Activated naive CD4-positive, alpha-beta T cell treated with anti-CD3 and anti-CD28 coated beads for 36 hours (primary cell): ENCODE measurements at regions of chr18 and their contacts with region 1.

Region 1: GRCh38 chr18:56575819-56576663 is 62.4 kb downstream of the TXNL1 start:
- DNase-seq: no peak
- H3K4me3 Mint-ChIP-seq: no peak overlapping the region
- H3K27ac Mint-ChIP-seq: no peak overlapping the region
- H3K4me1 Mint-ChIP-seq: no peaks in the 10 kb centered on the region
- H3K27me3 Mint-ChIP-seq: peaks cover 2% of the 10 kb centered on the region

Region 2: DNA sequence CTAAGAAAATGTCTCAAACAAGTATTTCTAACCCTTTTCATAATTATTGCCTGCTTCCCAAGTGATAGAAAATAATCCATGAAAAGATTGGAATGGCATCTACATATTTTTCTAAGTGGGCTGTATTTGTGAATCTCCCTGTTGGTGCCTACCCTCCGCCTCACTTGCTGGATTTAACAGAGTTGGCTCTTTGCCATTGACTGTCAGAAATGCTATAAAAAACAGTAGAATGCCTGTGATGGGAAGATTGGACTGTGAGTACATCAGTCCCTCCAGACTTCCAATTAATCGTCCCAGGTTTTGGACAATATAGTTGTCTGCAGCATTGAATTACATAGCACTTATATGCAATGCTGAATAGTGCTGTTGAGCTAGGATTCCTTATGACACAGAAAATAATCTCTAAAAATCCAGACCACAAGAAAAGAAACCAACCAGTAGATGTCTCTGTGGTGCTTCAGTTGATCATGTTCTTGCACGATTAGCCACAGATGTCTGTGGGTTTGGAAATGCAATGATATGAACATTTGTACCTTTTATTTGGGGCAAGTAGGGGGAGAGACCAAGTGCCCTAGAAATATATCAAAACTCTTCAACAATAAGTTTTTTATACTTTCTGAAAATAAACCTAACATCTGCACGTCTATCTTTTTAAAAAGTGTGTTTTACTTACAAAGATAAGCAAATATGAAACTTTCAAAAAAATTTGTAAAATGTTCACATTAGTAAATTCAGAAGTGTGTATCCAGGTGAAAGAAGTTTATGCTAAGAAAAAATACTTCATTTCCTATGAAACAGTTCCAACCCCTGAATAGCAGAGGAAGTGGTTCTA is 1896.5 kb before region 1 on chr18:
- CTCF ChIA-PET with region 1: no interaction called
- intact Hi-C with region 1: loop called (anchors 10 kb)
- DNase-seq: no peak
- H3K4me3 Mint-ChIP-seq: no peak overlapping the region
- H3K27ac Mint-ChIP-seq: no peak overlapping the region
- H3K4me1 Mint-ChIP-seq: peaks cover 4% of the 10 kb centered on the region
- H3K27me3 Mint-ChIP-seq: peaks cover 3% of the 10 kb centered on the region

Region 3: DNA sequence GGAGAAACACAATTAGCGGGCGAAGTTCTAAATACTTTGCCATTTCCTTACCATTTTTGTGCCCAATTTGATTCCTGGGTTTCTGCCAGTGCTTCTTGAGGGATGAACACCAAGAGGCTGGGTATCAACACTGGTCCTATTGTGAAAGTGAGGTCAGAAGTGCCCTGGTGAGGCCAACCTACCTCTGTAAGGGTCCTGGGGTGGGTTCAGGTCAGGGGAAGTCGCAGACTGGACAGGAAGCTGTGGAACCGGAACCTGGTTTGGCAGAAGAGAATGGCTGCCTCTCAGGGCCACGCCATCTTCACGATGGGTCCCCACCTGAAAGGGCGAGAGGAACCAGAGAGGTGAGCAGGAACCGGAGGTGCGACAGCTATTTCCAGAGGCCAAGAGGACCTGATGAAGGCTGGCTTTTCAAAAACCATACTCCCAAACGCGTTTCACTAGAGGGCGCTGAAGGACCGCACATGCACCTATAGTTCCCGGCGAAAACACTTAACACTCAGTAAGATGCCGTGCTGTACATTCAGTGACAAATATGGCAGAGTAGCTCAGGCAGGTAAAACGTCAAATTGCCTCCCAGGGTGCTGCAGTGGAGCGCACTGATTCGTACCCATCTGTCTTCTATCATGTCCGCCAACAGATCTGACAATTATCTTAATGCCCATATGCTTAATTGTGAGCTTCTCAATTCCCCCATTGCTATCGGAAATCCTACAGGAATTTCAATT is 1341.5 kb before region 1 on chr18:
- CTCF ChIA-PET with region 1: interaction called, 3 read pairs
- intact Hi-C with region 1: loop called (anchors 1 kb)
- DNase-seq: peak; percentile 77
- H3K4me3 Mint-ChIP-seq: no peak overlapping the region
- H3K27ac Mint-ChIP-seq: no peak overlapping the region
- H3K4me1 Mint-ChIP-seq: no peaks in the 10 kb centered on the region
- H3K27me3 Mint-ChIP-seq: no peaks in the 10 kb centered on the region

Region 4: DNA sequence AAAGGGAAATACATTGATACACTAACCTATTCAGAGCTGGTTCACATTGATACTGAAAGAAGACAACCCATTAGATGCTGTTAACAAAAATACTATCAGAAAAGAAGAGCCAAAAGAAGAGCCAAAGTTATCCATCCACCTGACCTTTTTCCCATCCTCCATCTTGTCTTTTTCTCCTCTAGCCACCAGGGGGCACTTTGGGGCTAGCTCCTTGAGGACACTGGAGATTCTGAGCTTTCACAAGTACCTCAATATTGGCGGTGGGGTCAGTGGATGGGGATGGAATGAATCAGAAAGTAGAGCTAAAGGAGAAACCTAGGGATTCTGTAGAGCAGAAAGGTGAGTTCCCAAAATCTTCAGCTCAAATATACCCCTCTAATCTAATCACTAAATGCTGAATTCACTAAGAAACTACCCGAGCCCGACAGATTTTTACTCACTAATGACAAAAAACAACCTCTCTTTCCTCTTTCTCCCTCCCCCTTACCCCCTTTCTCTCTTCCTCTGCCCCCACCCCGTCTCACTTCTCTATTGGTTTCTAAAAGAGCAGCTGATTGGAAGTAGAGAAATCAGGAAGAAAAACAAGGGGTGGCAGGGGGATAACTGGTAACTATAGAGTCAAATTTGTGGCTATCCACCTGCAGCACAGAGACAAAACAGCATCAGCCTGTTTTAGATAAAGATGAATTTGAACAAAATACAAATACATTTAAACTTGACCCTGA is 1191.3 kb before region 1 on chr18:
- CTCF ChIA-PET with region 1: no interaction called
- intact Hi-C with region 1: loop called (anchors 1 kb)
- DNase-seq: peak; percentile 16
- H3K4me3 Mint-ChIP-seq: no peak overlapping the region
- H3K27ac Mint-ChIP-seq: no peak overlapping the region
- H3K4me1 Mint-ChIP-seq: no peaks in the 10 kb centered on the region
- H3K27me3 Mint-ChIP-seq: no peaks in the 10 kb centered on the region

Region 5: DNA sequence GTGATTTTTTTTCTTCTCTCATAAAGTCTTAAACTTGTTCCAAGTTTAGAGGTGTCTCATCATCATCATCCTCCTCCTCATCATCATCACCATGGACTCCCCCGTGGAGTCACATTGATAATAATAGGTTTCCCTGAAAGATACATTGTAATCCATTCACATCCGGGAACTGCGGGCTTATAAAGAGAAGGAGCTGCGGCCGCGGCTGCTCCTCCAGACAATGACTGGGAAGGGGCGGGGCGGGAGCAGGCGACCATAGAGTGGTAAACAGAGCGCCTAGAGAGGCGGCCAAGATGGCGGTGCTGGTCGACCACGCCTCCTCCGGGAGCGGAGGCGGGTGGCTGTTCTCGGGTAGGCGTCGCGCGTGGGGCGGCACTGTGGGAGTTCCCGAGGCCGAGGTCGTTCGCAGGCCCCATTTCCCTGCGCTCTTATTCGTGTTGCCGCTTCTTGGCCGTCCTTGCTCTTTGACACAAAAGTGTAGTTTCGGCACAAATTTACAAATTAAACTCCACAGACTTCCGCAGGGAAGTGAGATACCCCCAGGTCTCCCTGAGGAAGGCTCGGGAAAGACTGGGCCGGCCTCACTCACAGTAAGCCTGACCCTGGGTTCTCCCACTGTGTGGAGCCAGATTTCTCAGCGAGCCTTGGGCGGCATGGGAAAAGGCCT is 986.3 kb before region 1 on chr18:
- CTCF ChIA-PET with region 1: no interaction called
- intact Hi-C with region 1: loop called (anchors 10 kb)
- DNase-seq: peak; percentile 86
- H3K4me3 Mint-ChIP-seq: peak overlapping the region; percentile 70
- H3K27ac Mint-ChIP-seq: no peak overlapping the region
- H3K4me1 Mint-ChIP-seq: peaks cover 19% of the 10 kb centered on the region
- H3K27me3 Mint-ChIP-seq: peaks cover 59% of the 10 kb centered on the region

Region 6: DNA sequence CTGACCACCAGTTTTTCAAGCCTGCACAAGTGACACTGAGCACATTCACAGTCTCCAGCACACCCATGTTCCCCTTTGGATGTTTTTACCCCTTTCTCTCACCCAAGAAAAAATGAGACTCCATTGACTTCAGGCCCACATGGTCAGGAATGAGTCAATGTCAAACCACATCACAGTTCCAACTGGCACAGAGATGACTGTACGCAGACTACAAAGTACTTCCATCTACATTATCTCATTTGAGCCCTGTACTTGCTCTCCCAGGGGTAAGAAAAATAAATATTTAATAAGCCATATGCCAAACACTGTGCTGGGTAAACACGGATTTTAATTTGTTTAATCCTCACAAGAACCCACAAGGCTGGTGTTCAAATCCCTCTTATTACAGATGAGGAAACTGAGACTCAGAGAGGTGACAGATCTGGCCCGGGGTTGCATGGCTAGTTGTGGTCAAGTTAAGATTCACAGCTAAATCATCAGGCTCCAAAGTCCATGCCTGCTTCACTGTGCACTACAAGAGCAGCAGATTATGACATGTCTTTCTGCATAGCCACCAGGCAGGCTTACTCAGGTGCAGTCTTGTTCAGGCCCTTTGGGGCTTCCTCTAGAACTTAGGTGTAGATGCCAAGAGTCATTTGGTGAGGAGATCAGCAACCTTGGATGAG is 43.7 kb before region 1 on chr18:
- CTCF ChIA-PET with region 1: no interaction called
- intact Hi-C with region 1: no loop called
- DNase-seq: peak; percentile 42
- H3K4me3 Mint-ChIP-seq: no peak overlapping the region
- H3K27ac Mint-ChIP-seq: no peak overlapping the region
- H3K4me1 Mint-ChIP-seq: peaks cover 2% of the 10 kb centered on the region
- H3K27me3 Mint-ChIP-seq: peaks cover 7% of the 10 kb centered on the region

Region 7: GRCh38 chr18:56738184-56738583 is 162.1 kb after region 1 on chr18:
- CTCF ChIA-PET with region 1: no interaction called
- intact Hi-C with region 1: no loop called
- DNase-seq: no peak
- H3K4me3 Mint-ChIP-seq: no peak overlapping the region
- H3K27ac Mint-ChIP-seq: no peak overlapping the region
- H3K4me1 Mint-ChIP-seq: peaks cover 6% of the 10 kb centered on the region
- H3K27me3 Mint-ChIP-seq: no peaks in the 10 kb centered on the region

Region 8: DNA sequence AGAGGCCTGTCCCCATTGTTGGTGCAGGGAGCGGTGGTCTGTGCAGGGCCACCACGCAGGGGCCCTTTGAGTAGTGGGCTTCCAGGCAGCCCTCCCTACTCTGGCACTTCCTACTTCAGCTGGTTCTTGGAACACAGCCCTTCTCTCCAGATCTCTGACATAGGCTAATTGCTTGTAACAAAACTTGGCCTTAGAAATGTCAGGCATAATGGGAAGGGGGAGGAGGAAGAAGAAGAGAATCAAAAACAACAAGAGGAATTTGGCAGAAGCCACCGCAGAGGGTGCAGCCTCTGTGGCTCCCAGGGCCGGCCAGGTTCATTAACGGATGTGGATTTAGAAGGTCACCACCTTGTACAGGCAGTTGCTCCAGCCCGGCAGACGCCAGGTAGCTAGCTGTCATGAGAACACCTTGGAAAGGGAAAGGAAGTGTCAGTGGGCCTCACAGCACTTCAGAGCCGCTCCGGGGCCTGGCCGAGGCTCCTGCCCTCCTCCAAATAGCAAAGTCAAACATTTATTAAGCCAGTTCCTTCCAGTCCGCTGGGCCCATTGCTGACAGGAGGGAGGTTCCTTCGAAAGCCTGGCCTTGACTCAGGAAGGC is 578.2 kb after region 1 on chr18:
- CTCF ChIA-PET with region 1: no interaction called
- intact Hi-C with region 1: no loop called
- DNase-seq: no peak
- H3K4me3 Mint-ChIP-seq: no peak overlapping the region
- H3K27ac Mint-ChIP-seq: no peak overlapping the region
- H3K4me1 Mint-ChIP-seq: no peaks in the 10 kb centered on the region
- H3K27me3 Mint-ChIP-seq: peaks cover 27% of the 10 kb centered on the region